A673 (cell line): ENCODE measurements at regions of chr13 and their contacts with region 1.

Region 1: GRCh38 chr13:81171065-81171647 is 830.2 kb upstream of the SPRY2 start:
- DNase-seq: peak; percentile 44
- H3K4me3 ChIP-seq: no peak overlapping the region
- H3K27ac ChIP-seq: no peak overlapping the region
- H3K4me1 ChIP-seq: no peaks in the 10 kb centered on the region
- H3K27me3 ChIP-seq: no peaks in the 10 kb centered on the region
- CTCF ChIP-seq: peak; percentile 66

Region 2: GRCh38 chr13:80204642-80205041 is 966.5 kb before region 1 on chr13:
- CTCF ChIA-PET with region 1: no interaction called
- POLR2A ChIA-PET with region 1: no interaction called
- intact Hi-C with region 1: no loop called
- DNase-seq: no peak
- H3K4me3 ChIP-seq: no peak overlapping the region
- H3K27ac ChIP-seq: no peak overlapping the region
- H3K4me1 ChIP-seq: peaks cover 9% of the 10 kb centered on the region
- H3K27me3 ChIP-seq: no peaks in the 10 kb centered on the region
- CTCF ChIP-seq: no peak

Region 3: DNA sequence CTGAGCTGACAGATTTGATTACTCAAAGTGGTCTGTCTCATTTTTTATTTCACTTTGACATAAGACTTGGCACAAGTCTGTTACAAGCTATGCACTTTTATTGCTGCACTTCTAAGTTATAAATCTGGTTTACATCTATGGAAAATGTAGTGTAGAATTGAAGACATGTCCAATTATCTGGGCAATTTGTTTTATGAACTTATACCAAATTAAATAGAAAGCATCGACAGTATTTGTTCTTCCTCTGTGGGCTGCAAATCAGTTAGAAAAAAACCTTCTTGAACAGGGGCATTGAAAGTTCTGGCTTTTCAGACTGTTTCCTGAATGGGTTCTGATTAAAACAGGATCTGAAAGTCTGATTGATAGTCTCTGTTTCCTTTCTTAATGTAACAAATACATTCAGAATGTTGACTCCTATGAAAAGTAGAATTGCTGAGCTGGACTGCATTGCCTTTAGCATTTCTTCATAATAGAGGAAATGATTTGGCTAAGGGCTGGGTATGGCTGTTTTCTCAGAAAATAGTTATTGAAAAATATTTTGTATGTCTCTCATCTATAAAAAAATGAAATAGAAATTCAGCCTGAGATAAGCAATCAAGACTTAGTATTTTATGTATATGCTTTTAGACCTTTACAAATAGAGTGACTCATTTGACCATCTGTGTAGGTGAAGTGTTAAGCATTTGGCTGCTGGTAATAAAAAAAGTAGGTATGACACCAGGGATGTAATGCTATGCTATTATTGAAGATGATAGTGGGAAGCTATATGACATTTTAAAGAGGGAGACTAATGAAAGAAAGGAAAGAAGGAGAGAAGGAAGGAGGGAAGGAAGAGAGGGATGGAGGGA is 619.3 kb before region 1 on chr13:
- CTCF ChIA-PET with region 1: no interaction called
- POLR2A ChIA-PET with region 1: no interaction called
- intact Hi-C with region 1: no loop called
- DNase-seq: peak; percentile 79
- H3K4me3 ChIP-seq: no peak overlapping the region
- H3K27ac ChIP-seq: no peak overlapping the region
- H3K4me1 ChIP-seq: peaks cover 12% of the 10 kb centered on the region
- H3K27me3 ChIP-seq: no peaks in the 10 kb centered on the region
- CTCF ChIP-seq: no peak

Region 4: GRCh38 chr13:80955501-80955900 is 215.7 kb before region 1 on chr13:
- CTCF ChIA-PET with region 1: no interaction called
- POLR2A ChIA-PET with region 1: no interaction called
- intact Hi-C with region 1: no loop called
- DNase-seq: no peak
- H3K4me3 ChIP-seq: no peak overlapping the region
- H3K27ac ChIP-seq: no peak overlapping the region
- H3K4me1 ChIP-seq: no peaks in the 10 kb centered on the region
- H3K27me3 ChIP-seq: no peaks in the 10 kb centered on the region
- CTCF ChIP-seq: no peak

Region 5: GRCh38 chr13:81442904-81443303 is 271.7 kb after region 1 on chr13:
- CTCF ChIA-PET with region 1: no interaction called
- POLR2A ChIA-PET with region 1: no interaction called
- intact Hi-C with region 1: no loop called
- DNase-seq: no peak
- H3K4me3 ChIP-seq: no peak overlapping the region
- H3K27ac ChIP-seq: no peak overlapping the region
- H3K4me1 ChIP-seq: no peaks in the 10 kb centered on the region
- H3K27me3 ChIP-seq: no peaks in the 10 kb centered on the region
- CTCF ChIP-seq: no peak

Region 6: GRCh38 chr13:81487151-81487550 is 316.0 kb after region 1 on chr13:
- CTCF ChIA-PET with region 1: no interaction called
- POLR2A ChIA-PET with region 1: no interaction called
- intact Hi-C with region 1: loop called (anchors 10 kb)
- DNase-seq: peak; percentile 65
- H3K4me3 ChIP-seq: no peak overlapping the region
- H3K27ac ChIP-seq: no peak overlapping the region
- H3K4me1 ChIP-seq: no peaks in the 10 kb centered on the region
- H3K27me3 ChIP-seq: no peaks in the 10 kb centered on the region
- CTCF ChIP-seq: peak; percentile 71

Region 7: DNA sequence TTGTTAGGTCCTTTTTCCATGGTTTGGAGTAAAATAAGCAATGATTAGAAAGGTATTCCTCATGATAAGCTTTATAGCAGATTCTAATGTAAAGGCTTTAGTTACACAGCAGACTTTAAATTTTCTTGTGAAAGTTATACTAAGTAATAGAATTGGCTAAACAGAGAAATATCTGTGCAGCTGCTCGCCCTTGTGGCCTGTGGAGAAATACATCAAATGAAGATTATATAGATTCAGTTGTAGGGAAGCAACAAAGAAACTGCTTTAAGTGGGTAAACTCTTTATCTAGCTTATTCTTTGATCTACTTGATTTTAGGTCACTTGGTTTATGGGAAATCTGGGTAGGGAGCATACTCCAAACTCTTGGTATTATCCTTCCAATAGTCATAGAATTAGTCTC is 439.5 kb after region 1 on chr13:
- CTCF ChIA-PET with region 1: no interaction called
- POLR2A ChIA-PET with region 1: no interaction called
- intact Hi-C with region 1: loop called (anchors 10 kb)
- DNase-seq: no peak
- H3K4me3 ChIP-seq: no peak overlapping the region
- H3K27ac ChIP-seq: no peak overlapping the region
- H3K4me1 ChIP-seq: no peaks in the 10 kb centered on the region
- H3K27me3 ChIP-seq: no peaks in the 10 kb centered on the region
- CTCF ChIP-seq: 0 out of 2 replicates have a peak, but pooled peaks have one; percentile 9

Region 8: GRCh38 chr13:82330499-82330898 is 1159.3 kb after region 1 on chr13:
- CTCF ChIA-PET with region 1: no interaction called
- POLR2A ChIA-PET with region 1: no interaction called
- intact Hi-C with region 1: loop called (anchors 10 kb)
- DNase-seq: peak; percentile 29
- H3K4me3 ChIP-seq: no peak overlapping the region
- H3K27ac ChIP-seq: no peak overlapping the region
- H3K4me1 ChIP-seq: peaks cover 5% of the 10 kb centered on the region
- H3K27me3 ChIP-seq: no peaks in the 10 kb centered on the region
- CTCF ChIP-seq: peak; percentile 57